Naive thymus-derived CD4-positive, alpha-beta T cell (primary cell): ENCODE measurements at regions of chrX and their contacts with region 1.

Region 1: GRCh38 chrX:55488593-55489313 is 895 bp downstream of the USP51 start:
- DNase-seq: peak; percentile 46 to 78 (median 69)
- ATAC-seq: peak; percentile 83
- H3K4me3 ChIP-seq: peak overlapping the region; percentile 81
- H3K4me3 Mint-ChIP-seq: peak overlapping the region; percentile 89 to 97 (median 96)
- H3K27ac ChIP-seq: peak overlapping the region; percentile 92
- H3K27ac Mint-ChIP-seq: peak overlapping the region; percentile 91 to 98 (median 96)
- H3K4me1 ChIP-seq: no peaks in the 10 kb centered on the region
- H3K4me1 Mint-ChIP-seq: peaks cover 0 to 16% (median 12%) of the 10 kb centered on the region in 7 donors
- H3K27me3 ChIP-seq: no peaks in the 10 kb centered on the region
- H3K27me3 Mint-ChIP-seq: no peaks in the 10 kb centered on the region

Region 2: GRCh38 chrX:55379396-55379795 is 109.4 kb before region 1 on chrX:
- CTCF ChIA-PET with region 1: no interaction called
- POLR2A ChIA-PET with region 1: no interaction called
- intact Hi-C with region 1: no loop called
- DNase-seq: no peak
- ATAC-seq: no peak
- H3K4me3 ChIP-seq: no peak overlapping the region
- H3K4me3 Mint-ChIP-seq: no peak overlapping the region
- H3K27ac ChIP-seq: no peak overlapping the region
- H3K27ac Mint-ChIP-seq: no peak overlapping the region
- H3K4me1 ChIP-seq: no peaks in the 10 kb centered on the region
- H3K4me1 Mint-ChIP-seq: no peaks in the 10 kb centered on the region
- H3K27me3 ChIP-seq: no peaks in the 10 kb centered on the region
- H3K27me3 Mint-ChIP-seq: no peaks in the 10 kb centered on the region

Region 3: GRCh38 chrX:55451990-55452832 is 36.5 kb before region 1 on chrX and contains the start of gene MAGEH1:
- CTCF ChIA-PET with region 1: interaction called, 3 read pairs
- POLR2A ChIA-PET with region 1: interaction called, 35 read pairs
- intact Hi-C with region 1: no loop called
- DNase-seq: peak; percentile 39 to 88 (median 81)
- ATAC-seq: peak; percentile 95
- H3K4me3 ChIP-seq: peak within 1 kb of the TSS; percentile 82
- H3K4me3 Mint-ChIP-seq: peak within 1 kb of the TSS; percentile 90 to 98 (median 95)
- H3K27ac ChIP-seq: peak within 1 kb of the TSS; percentile 88
- H3K27ac Mint-ChIP-seq: peak within 1 kb of the TSS; percentile 91 to 98 (median 95)
- H3K4me1 ChIP-seq: peaks cover 0 to 3% of the 10 kb centered on the region in 2 donors
- H3K4me1 Mint-ChIP-seq: peaks cover 2 to 23% (median 16%) of the 10 kb centered on the region in 7 donors
- H3K27me3 ChIP-seq: no peaks in the 10 kb centered on the region
- H3K27me3 Mint-ChIP-seq: peaks cover 0 to 3% (median 0%) of the 10 kb centered on the region in 5 donors
- total RNA-seq, gene MAGEH1: 12.3 to 29.6 (median 20.3) TPM

Region 4: DNA sequence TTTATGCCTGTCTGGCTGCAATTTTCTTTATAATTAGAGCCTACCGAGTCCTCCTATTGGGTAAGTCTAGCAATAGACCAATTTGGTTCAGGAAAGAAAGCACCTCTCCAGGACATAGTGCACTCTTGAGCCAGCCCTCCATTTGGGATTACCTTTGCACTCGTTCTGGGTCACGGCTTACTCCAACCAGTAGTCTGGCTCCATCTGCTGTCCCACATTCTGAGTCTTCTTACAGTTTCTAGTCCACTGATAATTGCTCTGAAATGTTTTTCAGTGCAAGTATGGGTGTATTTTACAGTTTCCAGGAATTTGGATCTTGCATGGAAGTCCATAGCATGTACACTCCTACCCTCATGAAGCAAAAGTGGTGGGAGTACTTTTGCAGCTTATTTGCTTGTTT is 35.7 kb after region 1 on chrX:
- CTCF ChIA-PET with region 1: no interaction called
- POLR2A ChIA-PET with region 1: no interaction called
- intact Hi-C with region 1: no loop called
- DNase-seq: no peak
- ATAC-seq: no peak
- H3K4me3 ChIP-seq: no peak overlapping the region
- H3K4me3 Mint-ChIP-seq: no peak overlapping the region
- H3K27ac ChIP-seq: no peak overlapping the region
- H3K27ac Mint-ChIP-seq: no peak overlapping the region
- H3K4me1 ChIP-seq: no peaks in the 10 kb centered on the region
- H3K4me1 Mint-ChIP-seq: peaks cover 0 to 6% (median 0%) of the 10 kb centered on the region in 7 donors
- H3K27me3 ChIP-seq: no peaks in the 10 kb centered on the region
- H3K27me3 Mint-ChIP-seq: peaks cover 0 to 8% (median 0%) of the 10 kb centered on the region in 5 donors

Region 5: DNA sequence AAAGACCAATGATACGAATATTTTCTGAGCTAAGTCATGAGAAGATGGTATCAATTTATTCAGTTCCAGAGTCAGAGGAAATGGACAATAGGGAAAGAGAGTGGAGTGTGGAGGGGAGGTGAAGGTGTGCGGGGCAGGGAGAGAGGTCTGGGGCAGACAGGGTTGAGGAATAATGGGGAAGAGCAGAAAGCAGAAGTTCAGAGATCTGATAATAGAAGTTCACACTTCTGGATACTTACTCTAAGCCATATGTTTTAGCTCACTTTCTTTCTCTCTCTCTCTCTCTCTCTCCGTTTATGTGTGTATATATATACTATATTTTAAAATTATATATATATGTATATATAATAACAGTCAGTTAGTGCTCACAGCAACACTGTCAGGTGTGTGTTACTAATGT is 174.8 kb after region 1 on chrX:
- CTCF ChIA-PET with region 1: no interaction called
- POLR2A ChIA-PET with region 1: no interaction called
- intact Hi-C with region 1: no loop called
- DNase-seq: no peak
- ATAC-seq: no peak
- H3K4me3 ChIP-seq: no peak overlapping the region
- H3K4me3 Mint-ChIP-seq: no peak overlapping the region
- H3K27ac ChIP-seq: no peak overlapping the region
- H3K27ac Mint-ChIP-seq: no peak overlapping the region
- H3K4me1 ChIP-seq: no peaks in the 10 kb centered on the region
- H3K4me1 Mint-ChIP-seq: peaks cover 0 to 5% (median 0%) of the 10 kb centered on the region in 7 donors
- H3K27me3 ChIP-seq: no peaks in the 10 kb centered on the region
- H3K27me3 Mint-ChIP-seq: no peaks in the 10 kb centered on the region

Region 6: DNA sequence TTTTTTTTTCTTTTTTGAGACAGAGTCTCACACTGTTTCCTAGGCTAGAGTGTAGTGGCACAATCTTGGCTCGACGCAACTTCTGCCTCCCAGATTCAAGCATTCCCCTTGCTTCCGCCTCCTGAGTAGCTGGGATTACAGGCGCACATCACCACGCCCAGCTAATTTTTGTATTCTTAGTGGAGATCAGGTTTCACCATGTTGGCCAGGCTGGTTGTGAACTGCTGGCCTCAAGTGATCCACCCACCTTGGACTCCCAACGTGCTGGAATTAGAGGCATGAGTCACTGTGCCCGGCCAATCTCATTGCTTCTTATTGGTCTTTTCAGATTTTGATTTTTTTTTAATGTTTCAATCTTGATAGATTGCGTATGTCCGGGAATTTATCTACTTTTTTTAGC is 1364.7 kb after region 1 on chrX:
- CTCF ChIA-PET with region 1: no interaction called
- POLR2A ChIA-PET with region 1: no interaction called
- intact Hi-C with region 1: no loop called
- DNase-seq: no peak
- ATAC-seq: no peak
- H3K4me3 ChIP-seq: no peak overlapping the region
- H3K4me3 Mint-ChIP-seq: no peak overlapping the region
- H3K27ac ChIP-seq: no peak overlapping the region
- H3K27ac Mint-ChIP-seq: no peak overlapping the region
- H3K4me1 ChIP-seq: no peaks in the 10 kb centered on the region
- H3K4me1 Mint-ChIP-seq: no peaks in the 10 kb centered on the region
- H3K27me3 ChIP-seq: no peaks in the 10 kb centered on the region
- H3K27me3 Mint-ChIP-seq: no peaks in the 10 kb centered on the region